CD8-positive, alpha-beta T cell (primary cell): ENCODE measurements at regions of chr5 and their contacts with region 1.

Region 1: GRCh38 chr5:73170522-73170921 is 2.5 kb upstream of the TMEM174 start:
- DNase-seq: peak in 3 of 9 experiments; percentile 15 to 44 (median 41)
- ATAC-seq: no peak
- H3K4me3 ChIP-seq: no peak overlapping the region
- H3K4me3 Mint-ChIP-seq: no peak overlapping the region
- H3K27ac ChIP-seq: no peak overlapping the region
- H3K27ac Mint-ChIP-seq: no peak overlapping the region
- H3K4me1 ChIP-seq: no peaks in the 10 kb centered on the region
- H3K4me1 Mint-ChIP-seq: no peaks in the 10 kb centered on the region
- H3K27me3 ChIP-seq: peaks cover 0 to 11% of the 10 kb centered on the region in 2 experiments
- H3K27me3 Mint-ChIP-seq: peaks cover 79% of the 10 kb centered on the region
- CTCF ChIP-seq: no peak

Region 2: GRCh38 chr5:73088026-73088425 is 82.5 kb before region 1 on chr5:
- CTCF ChIA-PET with region 1: no interaction called
- POLR2A ChIA-PET with region 1: no interaction called
- intact Hi-C with region 1: loop called in 1 of 2 experiments (anchors 10 kb)
- DNase-seq: no peak
- ATAC-seq: no peak
- H3K4me3 ChIP-seq: no peak overlapping the region
- H3K4me3 Mint-ChIP-seq: no peak overlapping the region
- H3K27ac ChIP-seq: no peak overlapping the region
- H3K27ac Mint-ChIP-seq: no peak overlapping the region
- H3K4me1 ChIP-seq: no peaks in the 10 kb centered on the region
- H3K4me1 Mint-ChIP-seq: peaks cover 2% of the 10 kb centered on the region
- H3K27me3 ChIP-seq: no peaks in the 10 kb centered on the region
- H3K27me3 Mint-ChIP-seq: peaks cover 7% of the 10 kb centered on the region
- CTCF ChIP-seq: no peak

Region 3: DNA sequence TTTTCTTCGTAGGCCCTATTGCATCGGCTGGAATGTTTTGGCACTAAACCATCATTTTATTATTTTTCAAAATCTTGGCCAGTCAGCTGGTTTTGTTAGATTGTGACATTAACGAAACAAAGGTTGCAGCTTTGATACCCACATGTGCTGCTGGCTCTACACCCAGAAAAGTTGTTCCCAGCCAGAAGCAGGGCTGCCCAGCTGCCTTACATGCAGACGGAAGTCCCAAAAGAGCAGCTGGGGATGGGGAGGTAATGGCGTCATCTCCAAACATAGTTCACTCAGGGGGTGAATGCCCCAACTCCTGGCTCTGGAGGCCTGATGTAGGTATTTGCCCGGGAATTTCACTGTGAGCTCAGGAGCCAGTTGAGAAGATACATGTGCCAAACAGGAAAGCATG is 26.8 kb before region 1 on chr5:
- CTCF ChIA-PET with region 1: no interaction called
- POLR2A ChIA-PET with region 1: no interaction called
- intact Hi-C with region 1: no loop called
- DNase-seq: no peak
- ATAC-seq: no peak
- H3K4me3 ChIP-seq: no peak overlapping the region
- H3K4me3 Mint-ChIP-seq: no peak overlapping the region
- H3K27ac ChIP-seq: no peak overlapping the region
- H3K27ac Mint-ChIP-seq: no peak overlapping the region
- H3K4me1 ChIP-seq: no peaks in the 10 kb centered on the region
- H3K4me1 Mint-ChIP-seq: no peaks in the 10 kb centered on the region
- H3K27me3 ChIP-seq: peaks cover 0 to 3% of the 10 kb centered on the region in 2 experiments
- H3K27me3 Mint-ChIP-seq: peaks cover 47% of the 10 kb centered on the region
- CTCF ChIP-seq: no peak